ENCODE measurements at regions of chr1 and their contacts with region 1.

Region 1: DNA sequence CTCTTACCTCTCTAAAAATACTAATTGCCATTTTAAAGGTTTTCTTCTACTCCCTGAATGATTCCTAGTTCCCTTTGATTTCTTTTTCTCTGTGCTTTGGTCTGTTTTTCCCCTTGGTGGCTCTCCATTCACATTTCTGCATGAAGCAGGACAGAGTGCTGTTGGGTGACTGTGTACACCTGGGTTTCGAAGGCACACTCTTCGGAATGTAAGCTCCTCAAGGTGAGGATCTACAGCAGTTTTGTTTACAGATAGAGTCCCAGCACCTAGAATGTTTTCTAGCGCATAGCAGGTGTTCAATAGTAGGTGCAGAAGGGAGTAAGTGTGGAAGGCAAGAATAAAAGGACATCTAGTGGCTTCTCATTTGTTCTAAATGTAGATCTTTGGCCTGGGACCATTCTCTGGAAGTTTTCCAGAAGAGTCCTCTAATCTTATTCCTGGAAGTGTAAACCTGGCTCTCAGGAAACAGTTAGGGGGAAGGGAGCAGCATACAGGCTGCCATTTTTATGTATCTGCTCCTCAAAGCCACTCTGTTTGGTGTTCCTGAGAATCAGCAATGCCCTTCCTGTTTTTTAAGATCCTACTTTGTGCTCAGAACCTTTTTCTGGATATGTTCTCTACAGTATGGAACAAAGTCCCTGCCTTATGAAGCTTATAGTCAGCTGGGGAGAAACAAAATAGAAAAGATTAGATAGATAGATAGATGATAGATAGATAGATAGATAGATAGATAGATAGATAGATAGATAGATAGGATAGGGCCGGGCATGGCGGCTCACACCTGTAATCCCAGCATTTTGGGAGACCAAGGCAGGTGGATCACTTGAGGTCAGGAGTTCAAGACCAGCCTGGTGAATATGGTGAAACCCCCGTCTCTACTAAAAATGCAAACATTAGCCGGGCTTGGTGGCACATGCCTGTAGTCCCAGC is 22.8 kb upstream of the EFNA1 start:
- DNase-seq: no peak
- H3K4me3 ChIP-seq: no peak overlapping the region
- H3K27ac ChIP-seq: peak overlapping the region in 1 of 2 donors; percentile 25
- H3K4me1 ChIP-seq: no peaks in the 10 kb centered on the region
- H3K27me3 ChIP-seq: no peaks in the 10 kb centered on the region
- CTCF ChIP-seq: no peak
- POLR2A ChIP-seq: no peak

Region 2: GRCh38 chr1:153717330-153717729 is 1387.5 kb before region 1 on chr1:
- intact Hi-C with region 1: loop called (anchors 5 kb)
- DNase-seq: no peak
- H3K4me3 ChIP-seq: no peak overlapping the region
- H3K27ac ChIP-seq: no peak overlapping the region
- H3K4me1 ChIP-seq: no peaks in the 10 kb centered on the region
- H3K27me3 ChIP-seq: no peaks in the 10 kb centered on the region
- CTCF ChIP-seq: no peak
- POLR2A ChIP-seq: no peak

Region 3: GRCh38 chr1:155360051-155360450 is 255.2 kb after region 1 on chr1:
- intact Hi-C with region 1: no loop called
- DNase-seq: no peak
- H3K4me3 ChIP-seq: no peak overlapping the region
- H3K27ac ChIP-seq: no peak overlapping the region
- H3K4me1 ChIP-seq: no peaks in the 10 kb centered on the region
- H3K27me3 ChIP-seq: no peaks in the 10 kb centered on the region
- CTCF ChIP-seq: no peak
- POLR2A ChIP-seq: no peak

Measured in breast epithelium (tissue), 4 donors.